Stomach (tissue), 19 donors: ENCODE measurements at regions of chr15 and their contacts with region 1.

Region 1: GRCh38 chr15:62847900-62848489 is 194.6 kb upstream of the TPM1 start:
- DNase-seq: peak; percentile 65 to 74
- H3K4me3 ChIP-seq: no peak overlapping the region
- H3K27ac ChIP-seq: peak overlapping the region in 1 of 5 donors; percentile 74
- H3K4me1 ChIP-seq: peaks cover 4 to 30% (median 16%) of the 10 kb centered on the region in 4 donors
- H3K27me3 ChIP-seq: no peaks in the 10 kb centered on the region
- CTCF ChIP-seq: peak in 5 of 7 experiments; percentile 32 to 58 (median 48)
- EP300 ChIP-seq: no peak
- POLR2A ChIP-seq: no peak

Region 2: DNA sequence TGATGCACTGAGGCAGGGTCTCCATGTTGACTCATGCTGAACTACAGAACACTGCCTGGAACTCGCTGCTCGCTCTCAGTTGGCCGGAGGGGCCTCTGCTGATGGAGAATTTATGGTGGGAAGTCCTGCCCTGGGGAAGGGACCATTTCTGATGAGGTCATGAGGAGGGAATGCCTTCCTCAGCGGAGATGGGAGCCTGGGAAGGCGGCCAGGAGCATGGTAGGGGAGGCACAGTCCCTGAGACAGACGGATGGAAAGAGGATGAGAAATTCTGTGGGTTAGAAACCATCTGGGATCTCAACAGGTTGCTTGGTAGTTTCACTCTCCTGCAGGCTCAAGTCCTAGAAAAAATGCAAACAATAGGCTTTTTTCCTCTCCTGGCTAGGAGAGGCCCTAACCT is 137.8 kb after region 1 on chr15:
- intact Hi-C with region 1: no loop called
- DNase-seq: peak in 1 of 2 donors; percentile 56
- H3K4me3 ChIP-seq: no peak overlapping the region
- H3K27ac ChIP-seq: no peak overlapping the region
- H3K4me1 ChIP-seq: peaks cover 0 to 17% (median 0%) of the 10 kb centered on the region in 4 donors
- H3K27me3 ChIP-seq: no peaks in the 10 kb centered on the region
- CTCF ChIP-seq: no peak
- EP300 ChIP-seq: no peak
- POLR2A ChIP-seq: no peak

Region 3: GRCh38 chr15:63107895-63108546 is 260.0 kb after region 1 on chr15:
- intact Hi-C with region 1: loop called (anchors 10 kb)
- DNase-seq: peak in 1 of 2 donors; percentile 81
- H3K4me3 ChIP-seq: no peak overlapping the region
- H3K27ac ChIP-seq: peak overlapping the region in 2 of 5 donors; percentile 34 to 46
- H3K4me1 ChIP-seq: peaks cover 0 to 13% (median 8%) of the 10 kb centered on the region in 4 donors
- H3K27me3 ChIP-seq: no peaks in the 10 kb centered on the region
- CTCF ChIP-seq: no peak
- EP300 ChIP-seq: no peak
- POLR2A ChIP-seq: no peak